Activated CD4-positive, alpha-beta T cell treated with anti-CD3 and anti-CD28 coated beads for 36 hours (primary cell): ENCODE measurements at regions of chr12 and their contacts with region 1.

Region 1: GRCh38 chr12:14384783-14385638 is 19.5 kb downstream of the ATF7IP start:
- DNase-seq: peak; percentile 75
- ATAC-seq: peak; percentile 96
- H3K4me3 Mint-ChIP-seq: peak overlapping the region; percentile 73
- H3K27ac Mint-ChIP-seq: peak overlapping the region; percentile 94
- H3K4me1 Mint-ChIP-seq: peaks cover 59% of the 10 kb centered on the region
- H3K27me3 Mint-ChIP-seq: no peaks in the 10 kb centered on the region

Region 2: GRCh38 chr12:14373217-14373616 is 11.8 kb before region 1 on chr12:
- CTCF ChIA-PET with region 1: interaction called, 38 read pairs
- POLR2A ChIA-PET with region 1: interaction called, 3 read pairs
- intact Hi-C with region 1: loop called in 1 of 2 experiments (anchors 1 kb)
- DNase-seq: no peak
- ATAC-seq: peak; percentile 27
- H3K4me3 Mint-ChIP-seq: peak overlapping the region; percentile 24
- H3K27ac Mint-ChIP-seq: peak overlapping the region; percentile 87
- H3K4me1 Mint-ChIP-seq: peaks cover 62% of the 10 kb centered on the region
- H3K27me3 Mint-ChIP-seq: no peaks in the 10 kb centered on the region

Region 3: GRCh38 chr12:14403711-14404196 is 18.7 kb after region 1 on chr12:
- CTCF ChIA-PET with region 1: interaction called, 7 read pairs
- POLR2A ChIA-PET with region 1: interaction called, 4 read pairs
- intact Hi-C with region 1: loop called in 1 of 2 experiments (anchors 2 kb)
- DNase-seq: no peak
- ATAC-seq: peak; percentile 39
- H3K4me3 Mint-ChIP-seq: peak overlapping the region; percentile 33
- H3K27ac Mint-ChIP-seq: peak overlapping the region; percentile 83
- H3K4me1 Mint-ChIP-seq: peaks cover 77% of the 10 kb centered on the region
- H3K27me3 Mint-ChIP-seq: no peaks in the 10 kb centered on the region

Region 4: GRCh38 chr12:14427929-14428328 is 42.9 kb after region 1 on chr12:
- CTCF ChIA-PET with region 1: no interaction called
- POLR2A ChIA-PET with region 1: no interaction called
- intact Hi-C with region 1: no loop called
- DNase-seq: no peak
- ATAC-seq: no peak
- H3K4me3 Mint-ChIP-seq: no peak overlapping the region
- H3K27ac Mint-ChIP-seq: no peak overlapping the region
- H3K4me1 Mint-ChIP-seq: peaks cover 73% of the 10 kb centered on the region
- H3K27me3 Mint-ChIP-seq: no peaks in the 10 kb centered on the region

Region 5: DNA sequence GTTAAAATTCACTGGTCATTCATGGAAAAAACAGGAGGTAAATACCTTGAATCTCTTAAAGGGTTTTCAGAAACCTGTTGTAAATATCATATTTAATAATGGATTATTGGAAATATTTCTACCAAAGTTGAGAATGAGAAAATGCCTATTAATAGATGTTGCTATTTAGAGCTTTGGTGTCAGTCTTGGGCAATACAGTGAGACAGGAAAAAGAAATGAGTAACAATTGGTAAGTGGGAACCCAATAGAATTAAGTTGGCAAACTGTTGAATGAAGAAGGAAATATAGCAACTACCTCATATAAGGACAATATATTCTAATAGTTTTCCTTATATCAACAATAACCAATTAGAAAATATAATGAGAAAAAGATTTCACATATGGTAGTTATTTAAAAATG is 58.5 kb after region 1 on chr12:
- CTCF ChIA-PET with region 1: no interaction called
- POLR2A ChIA-PET with region 1: no interaction called
- intact Hi-C with region 1: no loop called
- DNase-seq: no peak
- ATAC-seq: no peak
- H3K4me3 Mint-ChIP-seq: no peak overlapping the region
- H3K27ac Mint-ChIP-seq: no peak overlapping the region
- H3K4me1 Mint-ChIP-seq: peaks cover 20% of the 10 kb centered on the region
- H3K27me3 Mint-ChIP-seq: no peaks in the 10 kb centered on the region